B cell (primary cell): ENCODE measurements at regions of chr1 and their contacts with region 1.

Region 1: DNA sequence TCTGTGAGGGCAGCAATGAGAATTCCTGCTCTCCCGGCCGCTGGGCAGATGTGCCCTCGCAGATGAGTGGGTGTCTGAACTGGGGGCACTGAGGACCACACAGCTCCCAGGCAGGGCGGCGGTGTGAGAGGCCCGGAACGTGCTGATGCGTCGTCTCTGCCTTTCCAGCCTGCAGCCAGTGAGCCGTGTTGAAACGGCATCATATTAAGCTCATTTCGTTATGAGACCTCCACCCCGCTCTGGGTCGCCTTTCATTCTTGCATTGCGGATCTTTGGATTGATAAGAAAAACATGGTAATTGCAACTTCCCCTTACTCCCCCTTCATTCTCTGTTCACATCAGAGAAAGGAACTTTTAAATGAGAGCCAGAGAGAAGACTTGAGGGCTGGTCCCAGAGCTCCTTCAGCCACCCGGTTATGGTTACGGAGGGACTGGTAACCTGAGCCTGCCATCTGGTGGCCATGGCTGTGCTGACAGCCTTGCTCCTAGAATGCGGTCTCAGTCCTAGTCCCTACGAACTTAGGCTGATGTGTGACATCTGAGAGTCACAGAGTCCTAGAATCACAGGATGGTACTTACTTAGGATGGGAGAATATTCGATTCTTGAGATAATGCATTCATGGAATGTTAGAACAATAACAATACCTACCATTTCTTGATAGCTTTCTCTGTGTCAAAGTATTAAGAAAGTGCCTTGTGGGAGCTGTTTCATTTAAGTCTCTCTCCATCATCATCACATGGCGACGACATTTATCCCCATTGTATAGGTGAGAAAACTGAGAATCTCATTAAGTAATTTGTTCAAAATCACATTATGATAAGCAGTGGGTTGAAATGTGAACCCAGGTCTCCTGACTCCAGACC is 271.0 kb downstream of the TRABD2B start:
- DNase-seq: peak; percentile 60
- ATAC-seq: peak; percentile 66
- H3K4me3 ChIP-seq: peak overlapping the region in 1 of 5 experiments; percentile 24
- H3K4me3 Mint-ChIP-seq: peak overlapping the region; percentile 72
- H3K27ac ChIP-seq: no peak overlapping the region
- H3K27ac Mint-ChIP-seq: no peak overlapping the region
- H3K4me1 ChIP-seq: peaks cover 5 to 11% of the 10 kb centered on the region in 2 donors
- H3K4me1 Mint-ChIP-seq: peaks cover 10% of the 10 kb centered on the region
- H3K27me3 ChIP-seq: peaks cover 0 to 35% (median 8%) of the 10 kb centered on the region in 4 experiments
- H3K27me3 Mint-ChIP-seq: peaks cover 35% of the 10 kb centered on the region
- CTCF ChIP-seq: peak; percentile 82

Region 2: GRCh38 chr1:47179017-47179987 is 546.9 kb before region 1 on chr1:
- CTCF ChIA-PET with region 1: interaction called, 19 read pairs
- POLR2A ChIA-PET with region 1: no interaction called
- intact Hi-C with region 1: no loop called
- DNase-seq: peak; percentile 69
- ATAC-seq: peak; percentile 69
- H3K4me3 ChIP-seq: peak overlapping the region in 3 of 5 experiments; percentile 18 to 45 (median 31)
- H3K4me3 Mint-ChIP-seq: peak overlapping the region; percentile 83
- H3K27ac ChIP-seq: no peak overlapping the region
- H3K27ac Mint-ChIP-seq: peak overlapping the region; percentile 1
- H3K4me1 ChIP-seq: peaks cover 6 to 11% of the 10 kb centered on the region in 2 donors
- H3K4me1 Mint-ChIP-seq: peaks cover 10% of the 10 kb centered on the region
- H3K27me3 ChIP-seq: peaks cover 0 to 25% (median 7%) of the 10 kb centered on the region in 4 experiments
- H3K27me3 Mint-ChIP-seq: peaks cover 50% of the 10 kb centered on the region
- CTCF ChIP-seq: peak; percentile 79

Region 3: GRCh38 chr1:47192458-47193384 is 533.5 kb before region 1 on chr1:
- CTCF ChIA-PET with region 1: interaction called, 37 read pairs
- POLR2A ChIA-PET with region 1: no interaction called
- intact Hi-C with region 1: loop called (anchors 1 kb)
- DNase-seq: peak; percentile 74
- ATAC-seq: peak; percentile 66
- H3K4me3 ChIP-seq: no peak overlapping the region
- H3K4me3 Mint-ChIP-seq: no peak overlapping the region
- H3K27ac ChIP-seq: no peak overlapping the region
- H3K27ac Mint-ChIP-seq: no peak overlapping the region
- H3K4me1 ChIP-seq: no peaks in the 10 kb centered on the region
- H3K4me1 Mint-ChIP-seq: no peaks in the 10 kb centered on the region
- H3K27me3 ChIP-seq: no peaks in the 10 kb centered on the region
- H3K27me3 Mint-ChIP-seq: peaks cover 10% of the 10 kb centered on the region
- CTCF ChIP-seq: peak; percentile 97

Region 4: DNA sequence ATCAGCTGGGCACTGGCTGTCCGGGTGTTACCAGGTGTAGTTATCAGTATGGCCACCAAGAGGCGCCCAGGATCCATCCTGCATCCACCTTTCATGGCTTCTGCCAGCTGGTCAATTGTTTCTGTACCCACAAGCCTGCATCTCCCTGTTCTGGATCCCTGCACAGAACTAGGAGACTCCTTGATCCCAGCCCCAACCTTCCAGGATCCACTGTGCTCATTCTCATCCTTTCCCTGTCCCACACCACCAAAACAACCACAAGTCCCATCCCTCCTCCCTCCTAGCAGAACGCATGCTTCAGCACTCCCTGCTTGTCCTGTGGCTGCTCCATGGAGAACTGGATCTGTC is 337.4 kb before region 1 on chr1:
- CTCF ChIA-PET with region 1: interaction called, 38 read pairs
- POLR2A ChIA-PET with region 1: no interaction called
- intact Hi-C with region 1: no loop called
- DNase-seq: peak; percentile 36
- ATAC-seq: peak; percentile 39
- H3K4me3 ChIP-seq: no peak overlapping the region
- H3K4me3 Mint-ChIP-seq: no peak overlapping the region
- H3K27ac ChIP-seq: no peak overlapping the region
- H3K27ac Mint-ChIP-seq: no peak overlapping the region
- H3K4me1 ChIP-seq: no peaks in the 10 kb centered on the region
- H3K4me1 Mint-ChIP-seq: no peaks in the 10 kb centered on the region
- H3K27me3 ChIP-seq: no peaks in the 10 kb centered on the region
- H3K27me3 Mint-ChIP-seq: peaks cover 21% of the 10 kb centered on the region
- CTCF ChIP-seq: peak; percentile 58

Region 5: DNA sequence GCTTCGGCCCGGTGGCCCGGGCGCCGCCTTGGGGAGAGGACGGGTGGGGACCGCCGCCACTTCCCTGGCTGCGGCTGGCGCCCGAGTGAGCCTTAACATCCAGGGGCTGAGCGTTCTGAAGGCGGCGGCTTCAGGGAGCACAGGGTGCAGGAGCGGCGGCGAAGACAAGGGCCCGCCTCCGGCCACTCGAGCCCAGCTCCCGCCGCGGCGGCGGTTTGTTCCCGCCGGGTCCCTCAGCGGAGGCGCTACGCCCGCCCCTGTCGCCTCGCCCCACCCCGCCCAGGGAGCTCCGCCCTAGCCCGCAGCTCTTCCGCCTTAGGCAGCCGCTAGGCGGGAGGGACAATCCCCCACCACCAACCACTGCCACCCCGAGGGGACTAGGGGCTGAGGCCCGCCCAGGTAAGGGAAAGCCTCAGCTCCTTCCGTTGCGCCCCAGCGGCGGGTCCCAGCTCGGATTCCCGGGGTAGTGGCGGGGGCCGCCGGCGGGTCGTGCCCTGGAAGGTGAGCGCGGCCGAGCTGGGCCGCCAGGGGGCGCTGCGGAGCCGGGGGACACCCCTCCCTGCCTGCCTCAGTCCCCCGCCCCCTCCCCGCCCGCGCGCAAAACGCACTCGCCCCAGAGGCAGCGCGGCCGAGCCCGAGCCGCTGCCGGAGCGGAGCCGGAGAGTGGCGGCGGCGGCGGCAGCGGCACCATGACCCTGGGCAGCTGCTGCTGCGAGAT is 288.6 kb before region 1 on chr1 and contains the start of gene FOXD2:
- CTCF ChIA-PET with region 1: interaction called, 18 read pairs
- POLR2A ChIA-PET with region 1: interaction called, 4 read pairs
- intact Hi-C with region 1: loop called (anchors 1 kb)
- DNase-seq: peak; percentile 95
- ATAC-seq: peak; percentile 89
- H3K4me3 ChIP-seq: peak within 1 kb of the TSS; percentile 34 to 83 (median 73)
- H3K4me3 Mint-ChIP-seq: peak within 1 kb of the TSS; percentile 90
- H3K27ac ChIP-seq: peak within 1 kb of the TSS in 1 of 2 donors; percentile 52
- H3K27ac Mint-ChIP-seq: peak within 1 kb of the TSS; percentile 81
- H3K4me1 ChIP-seq: peaks cover 36 to 41% of the 10 kb centered on the region in 2 donors
- H3K4me1 Mint-ChIP-seq: peaks cover 39% of the 10 kb centered on the region
- H3K27me3 ChIP-seq: peaks cover 4 to 78% (median 42%) of the 10 kb centered on the region in 4 experiments
- H3K27me3 Mint-ChIP-seq: peaks cover 29% of the 10 kb centered on the region
- CTCF ChIP-seq: peak; percentile 98
- total RNA-seq, gene FOXD2: 0.36 and 0.37 TPM in 2 replicates

Region 6: GRCh38 chr1:47710329-47711071 is 15.7 kb before region 1 on chr1:
- CTCF ChIA-PET with region 1: interaction called, 28 read pairs
- POLR2A ChIA-PET with region 1: no interaction called
- intact Hi-C with region 1: no loop called
- DNase-seq: peak; percentile 64
- ATAC-seq: peak; percentile 65
- H3K4me3 ChIP-seq: peak overlapping the region in 1 of 5 experiments; percentile 38
- H3K4me3 Mint-ChIP-seq: peak overlapping the region; percentile 15
- H3K27ac ChIP-seq: no peak overlapping the region
- H3K27ac Mint-ChIP-seq: no peak overlapping the region
- H3K4me1 ChIP-seq: peaks cover 21 to 24% of the 10 kb centered on the region in 2 donors
- H3K4me1 Mint-ChIP-seq: peaks cover 17% of the 10 kb centered on the region
- H3K27me3 ChIP-seq: peaks cover 0 to 79% (median 32%) of the 10 kb centered on the region in 4 experiments
- H3K27me3 Mint-ChIP-seq: peaks cover 65% of the 10 kb centered on the region
- CTCF ChIP-seq: peak; percentile 88

Region 7: DNA sequence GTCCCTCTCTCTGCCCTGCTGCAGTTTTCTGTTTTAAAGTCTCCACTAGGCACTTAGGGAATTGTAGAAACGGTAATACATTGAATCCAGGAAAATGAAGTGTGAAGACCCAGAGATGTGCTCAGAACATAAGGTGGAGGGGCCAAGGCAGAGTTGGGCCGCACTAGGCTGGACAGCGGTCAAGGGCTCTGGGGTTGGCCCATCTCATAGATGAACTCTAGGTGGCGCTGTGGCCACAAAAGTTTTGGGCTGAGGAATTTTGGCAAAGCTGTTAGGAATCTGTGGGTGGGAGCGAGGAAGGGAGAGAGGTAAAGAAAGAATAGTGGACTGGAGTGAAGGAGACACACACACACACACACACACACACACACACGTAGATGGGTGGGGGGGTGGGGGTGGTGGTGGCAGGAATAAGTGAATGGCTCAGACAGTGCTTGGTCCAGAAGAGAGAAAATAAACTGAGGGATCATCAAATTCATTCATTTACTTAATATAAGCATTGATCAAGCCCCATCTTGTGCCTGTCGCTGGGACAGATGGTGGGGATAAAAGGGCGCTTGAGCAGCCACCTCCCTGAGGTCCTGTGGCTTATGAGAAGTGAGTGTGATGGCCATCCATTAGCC is 12.4 kb after region 1 on chr1:
- CTCF ChIA-PET with region 1: interaction called, 13 read pairs
- POLR2A ChIA-PET with region 1: no interaction called
- intact Hi-C with region 1: no loop called
- DNase-seq: no peak
- ATAC-seq: no peak
- H3K4me3 ChIP-seq: no peak overlapping the region
- H3K4me3 Mint-ChIP-seq: no peak overlapping the region
- H3K27ac ChIP-seq: no peak overlapping the region
- H3K27ac Mint-ChIP-seq: no peak overlapping the region
- H3K4me1 ChIP-seq: no peaks in the 10 kb centered on the region
- H3K4me1 Mint-ChIP-seq: no peaks in the 10 kb centered on the region
- H3K27me3 ChIP-seq: peaks cover 0 to 27% (median 7%) of the 10 kb centered on the region in 4 experiments
- H3K27me3 Mint-ChIP-seq: peaks cover 47% of the 10 kb centered on the region
- CTCF ChIP-seq: peak; percentile 21